CD4-positive, alpha-beta memory T cell (primary cell): ENCODE measurements at regions of chr7 and their contacts with region 1.

Region 1: GRCh38 chr7:101173752-101174244 is 6.3 kb downstream of the NAT16 start:
- DNase-seq: peak; percentile 62 to 67 (median 64)
- H3K4me3 ChIP-seq: no peak overlapping the region
- H3K4me3 Mint-ChIP-seq: peak overlapping the region; percentile 20 to 80 (median 60)
- H3K27ac ChIP-seq: no peak overlapping the region
- H3K27ac Mint-ChIP-seq: peak overlapping the region in 2 of 7 donors; percentile 41 to 76
- H3K4me1 ChIP-seq: peaks cover 56% of the 10 kb centered on the region
- H3K4me1 Mint-ChIP-seq: peaks cover 30 to 56% (median 44%) of the 10 kb centered on the region in 4 donors
- H3K27me3 ChIP-seq: peaks cover 72% of the 10 kb centered on the region
- H3K27me3 Mint-ChIP-seq: peaks cover 60 to 76% of the 10 kb centered on the region in 2 donors

Region 2: DNA sequence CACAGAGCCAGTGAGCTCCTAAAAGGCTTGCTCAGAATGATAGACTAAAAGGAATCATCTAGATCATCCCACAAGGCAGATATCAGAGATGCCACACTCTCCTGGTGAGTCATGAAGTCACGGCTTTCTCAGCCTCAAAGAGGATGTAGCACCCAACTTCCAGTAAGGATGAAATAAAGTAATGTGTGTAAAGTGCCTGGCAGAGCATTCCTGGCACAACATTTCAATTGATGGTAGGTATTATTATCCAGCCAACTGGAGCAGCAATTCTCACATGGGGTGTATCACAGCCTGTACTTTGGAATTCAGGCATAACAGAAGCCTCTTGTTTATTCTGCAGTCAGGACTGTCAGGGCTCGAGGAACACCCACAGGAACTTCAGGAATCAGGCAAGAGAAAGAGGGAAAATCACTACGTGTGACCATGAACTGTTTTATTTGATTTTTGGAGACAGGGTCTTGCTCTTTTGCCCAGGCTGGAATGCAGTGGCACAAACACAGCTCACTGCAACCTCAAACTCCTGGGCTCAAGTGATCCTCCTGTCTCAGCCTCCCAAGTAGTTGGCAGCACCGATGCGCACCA is 11.6 kb after region 1 on chr7:
- CTCF ChIA-PET with region 1: interaction called, 23 read pairs
- POLR2A ChIA-PET with region 1: no interaction called
- intact Hi-C with region 1: no loop called
- DNase-seq: no peak
- H3K4me3 ChIP-seq: no peak overlapping the region
- H3K4me3 Mint-ChIP-seq: no peak overlapping the region
- H3K27ac ChIP-seq: no peak overlapping the region
- H3K27ac Mint-ChIP-seq: no peak overlapping the region
- H3K4me1 ChIP-seq: no peaks in the 10 kb centered on the region
- H3K4me1 Mint-ChIP-seq: peaks cover 0 to 11% (median 4%) of the 10 kb centered on the region in 4 donors
- H3K27me3 ChIP-seq: peaks cover 4% of the 10 kb centered on the region
- H3K27me3 Mint-ChIP-seq: peaks cover 25 to 33% of the 10 kb centered on the region in 2 donors

Region 3: GRCh38 chr7:101250324-101250723 is 76.5 kb after region 1 on chr7:
- CTCF ChIA-PET with region 1: no interaction called
- POLR2A ChIA-PET with region 1: no interaction called
- intact Hi-C with region 1: no loop called
- DNase-seq: no peak
- H3K4me3 ChIP-seq: no peak overlapping the region
- H3K4me3 Mint-ChIP-seq: peak overlapping the region; percentile 3 to 100 (median 87)
- H3K27ac ChIP-seq: no peak overlapping the region
- H3K27ac Mint-ChIP-seq: peak overlapping the region in 4 of 7 donors; percentile 63 to 82 (median 66)
- H3K4me1 ChIP-seq: peaks cover 23% of the 10 kb centered on the region
- H3K4me1 Mint-ChIP-seq: peaks cover 21 to 46% (median 31%) of the 10 kb centered on the region in 4 donors
- H3K27me3 ChIP-seq: no peaks in the 10 kb centered on the region
- H3K27me3 Mint-ChIP-seq: peaks cover 0 to 4% of the 10 kb centered on the region in 2 donors